Right ventricle myocardium inferior (tissue), 1 donor: ENCODE measurements at regions of chr5 and their contacts with region 1.

Region 1: DNA sequence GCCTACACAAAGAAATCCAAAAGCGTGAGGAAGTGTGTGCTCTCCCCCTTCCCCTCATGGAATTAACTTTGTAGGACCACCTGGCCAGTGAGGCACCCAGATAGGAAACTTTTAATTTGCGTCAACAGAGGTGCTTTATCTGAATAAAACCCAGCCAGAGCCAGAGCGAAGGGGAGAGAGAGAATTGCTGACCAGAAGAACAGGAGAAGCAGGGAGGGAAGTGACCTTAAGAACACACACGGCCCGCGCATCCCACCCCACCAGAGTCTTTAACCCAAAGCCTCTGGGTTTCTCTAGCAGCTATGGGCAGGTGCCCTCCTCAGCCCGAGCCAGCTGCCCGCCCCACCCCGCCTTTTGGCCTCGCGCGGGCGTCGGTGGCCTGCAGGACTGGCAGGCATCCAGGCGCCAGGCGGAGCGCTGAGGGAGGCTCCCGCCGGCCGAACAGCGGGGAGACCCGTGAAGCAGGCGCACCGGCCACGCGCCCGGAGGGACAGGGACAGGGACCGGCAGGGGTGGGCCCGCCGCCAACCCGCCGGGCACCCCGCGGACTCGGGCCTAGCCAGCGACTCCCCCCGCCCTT is 580 bp downstream of the ERAP1 start:
- DNase-seq: peak; percentile 90
- ATAC-seq: peak; percentile 77

Region 2: GRCh38 chr5:96527768-96528661 is 279.1 kb before region 1 on chr5:
- intact Hi-C with region 1: no loop called
- DNase-seq: no peak
- ATAC-seq: no peak

Region 3: GRCh38 chr5:96876292-96876850 is 69.2 kb after region 1 on chr5 and contains the start of gene ERAP2:
- intact Hi-C with region 1: loop called (anchors 1 kb)
- DNase-seq: no peak
- ATAC-seq: peak; percentile 57
- total RNA-seq, gene ERAP2: 6.4 TPM

Region 4: DNA sequence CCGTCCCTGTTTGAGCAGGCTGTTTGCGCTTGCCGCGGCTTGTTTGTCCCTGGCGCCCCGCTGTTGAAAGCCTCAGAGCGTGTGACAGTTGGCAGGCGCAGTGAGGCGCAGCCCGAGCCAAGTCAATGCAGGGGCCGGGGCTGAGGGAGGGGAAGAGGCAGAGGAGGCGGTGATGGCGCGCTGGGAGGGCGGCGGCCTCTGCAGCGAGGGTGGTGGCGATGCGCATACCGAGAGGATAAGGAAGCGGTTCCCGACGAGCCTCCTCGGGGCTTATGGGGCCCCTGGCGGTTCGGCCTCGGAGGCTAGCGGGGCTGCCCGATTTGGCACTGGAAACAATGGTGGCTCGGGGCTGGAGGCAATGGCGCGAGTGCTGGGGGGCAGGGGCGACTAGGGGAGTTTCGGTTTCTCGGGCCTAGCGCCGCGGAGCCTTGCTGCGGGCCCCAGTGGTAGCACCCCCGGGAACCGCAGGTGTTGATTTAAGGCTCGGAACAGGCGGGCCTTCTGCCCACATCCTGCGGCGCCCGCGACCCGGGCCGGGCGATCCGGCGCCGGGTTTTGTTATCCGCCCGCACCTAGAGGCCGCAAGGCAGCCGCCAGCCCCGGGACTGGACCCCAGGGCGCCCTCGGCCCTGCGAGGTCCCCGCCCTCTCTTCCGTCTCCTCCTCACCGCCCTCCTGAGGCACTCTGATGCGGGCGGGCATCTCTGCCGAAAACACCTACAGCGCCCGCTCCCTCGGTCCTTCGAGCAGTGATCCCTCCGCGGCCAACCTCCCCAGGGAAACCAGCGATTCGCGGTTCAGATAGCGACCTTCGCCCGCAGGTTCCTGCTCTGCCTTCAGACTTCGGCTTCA is 127.8 kb after region 1 on chr5:
- intact Hi-C with region 1: loop called (anchors 5 kb)
- DNase-seq: peak; percentile 97
- ATAC-seq: peak; percentile 90

Region 5: GRCh38 chr5:96963267-96963666 is 156.1 kb after region 1 on chr5:
- intact Hi-C with region 1: no loop called
- DNase-seq: no peak
- ATAC-seq: peak; percentile 89